Mammary epithelial cell (primary cell): ENCODE measurements at regions of chr12 and their contacts with region 1.

Region 1: DNA sequence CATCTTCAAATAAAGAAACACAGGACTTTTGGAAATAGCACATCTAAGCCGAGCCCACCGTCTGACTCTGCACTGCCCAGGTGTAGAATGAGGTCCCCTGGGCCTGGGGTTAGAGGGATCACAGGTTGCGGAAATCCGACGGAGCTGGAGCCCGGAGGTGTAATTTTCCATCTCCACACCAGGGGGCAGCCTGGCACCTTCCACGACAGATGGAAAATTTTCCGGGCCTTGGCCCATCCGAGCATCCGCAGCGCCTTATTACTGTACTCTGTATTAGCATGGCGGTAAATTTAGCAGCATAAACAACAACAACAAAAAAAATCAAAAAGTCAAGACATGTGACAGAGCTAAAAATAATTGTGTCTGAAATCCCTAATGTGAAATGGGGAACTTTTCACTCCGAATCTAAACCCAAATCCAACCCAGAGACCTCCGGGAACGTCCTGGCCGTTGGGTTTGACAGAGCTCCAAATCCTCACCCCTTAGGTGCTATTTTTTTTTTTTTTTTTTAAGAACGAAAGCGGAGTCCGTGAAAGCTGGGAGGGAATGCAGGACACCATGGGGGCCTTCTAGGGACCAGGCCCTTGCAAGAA is 93.9 kb downstream of the KSR2 start:
- DNase-seq: peak; percentile 32
- H3K4me3 ChIP-seq: no peak overlapping the region
- H3K27ac ChIP-seq: no peak overlapping the region
- H3K4me1 ChIP-seq: no peaks in the 10 kb centered on the region
- H3K27me3 ChIP-seq: no peaks in the 10 kb centered on the region
- CTCF ChIP-seq: peak; percentile 70 to 80

Region 2: GRCh38 chr12:117926391-117926899 is 51.5 kb after region 1 on chr12:
- CTCF ChIA-PET with region 1: no interaction called
- dilution Hi-C with region 1: no loop called
- in situ Hi-C with region 1: no loop called
- intact Hi-C with region 1: no loop called
- DNase-seq: no peak
- H3K4me3 ChIP-seq: no peak overlapping the region
- H3K27ac ChIP-seq: no peak overlapping the region
- H3K4me1 ChIP-seq: no peaks in the 10 kb centered on the region
- H3K27me3 ChIP-seq: no peaks in the 10 kb centered on the region
- CTCF ChIP-seq: no peak

Region 3: DNA sequence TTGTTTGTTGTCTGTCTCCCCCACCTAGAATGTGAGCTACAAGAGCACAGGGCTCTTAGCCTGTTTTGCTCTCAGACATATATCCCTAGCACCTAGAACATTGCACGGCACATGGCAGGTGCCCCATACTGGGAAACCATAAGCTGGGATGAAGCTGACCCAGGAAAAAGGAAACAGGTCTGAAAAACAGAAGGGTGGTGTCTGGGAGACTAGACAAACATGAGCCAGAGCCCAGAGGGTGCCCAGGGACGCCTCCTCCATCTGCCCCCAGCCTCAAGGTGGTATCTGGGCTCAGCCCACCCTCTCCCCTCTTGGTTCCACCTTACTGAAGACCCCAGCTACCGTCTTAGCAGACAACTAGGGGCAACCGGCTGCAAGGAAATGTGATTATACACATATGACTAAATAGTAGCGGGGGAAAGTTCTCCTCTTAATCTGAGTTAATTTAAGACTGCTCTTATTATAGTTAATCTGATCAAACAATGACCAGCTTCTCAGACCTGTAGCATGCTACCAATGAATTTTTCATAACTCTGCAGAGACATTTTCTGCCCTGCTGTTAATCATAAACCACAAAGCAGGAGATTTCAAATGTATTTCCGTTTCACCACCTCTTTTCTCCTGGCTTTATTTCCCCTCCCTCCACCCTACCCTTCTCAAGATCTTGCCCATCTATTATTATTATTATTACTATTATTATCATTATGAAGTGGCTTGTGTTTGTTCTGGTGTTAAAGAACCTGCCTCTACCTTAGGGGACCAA is 62.0 kb after region 1 on chr12:
- CTCF ChIA-PET with region 1: no interaction called
- dilution Hi-C with region 1: no loop called
- in situ Hi-C with region 1: no loop called
- intact Hi-C with region 1: no loop called
- DNase-seq: no peak
- H3K4me3 ChIP-seq: no peak overlapping the region
- H3K27ac ChIP-seq: no peak overlapping the region
- H3K4me1 ChIP-seq: no peaks in the 10 kb centered on the region
- H3K27me3 ChIP-seq: no peaks in the 10 kb centered on the region
- CTCF ChIP-seq: no peak

Region 4: DNA sequence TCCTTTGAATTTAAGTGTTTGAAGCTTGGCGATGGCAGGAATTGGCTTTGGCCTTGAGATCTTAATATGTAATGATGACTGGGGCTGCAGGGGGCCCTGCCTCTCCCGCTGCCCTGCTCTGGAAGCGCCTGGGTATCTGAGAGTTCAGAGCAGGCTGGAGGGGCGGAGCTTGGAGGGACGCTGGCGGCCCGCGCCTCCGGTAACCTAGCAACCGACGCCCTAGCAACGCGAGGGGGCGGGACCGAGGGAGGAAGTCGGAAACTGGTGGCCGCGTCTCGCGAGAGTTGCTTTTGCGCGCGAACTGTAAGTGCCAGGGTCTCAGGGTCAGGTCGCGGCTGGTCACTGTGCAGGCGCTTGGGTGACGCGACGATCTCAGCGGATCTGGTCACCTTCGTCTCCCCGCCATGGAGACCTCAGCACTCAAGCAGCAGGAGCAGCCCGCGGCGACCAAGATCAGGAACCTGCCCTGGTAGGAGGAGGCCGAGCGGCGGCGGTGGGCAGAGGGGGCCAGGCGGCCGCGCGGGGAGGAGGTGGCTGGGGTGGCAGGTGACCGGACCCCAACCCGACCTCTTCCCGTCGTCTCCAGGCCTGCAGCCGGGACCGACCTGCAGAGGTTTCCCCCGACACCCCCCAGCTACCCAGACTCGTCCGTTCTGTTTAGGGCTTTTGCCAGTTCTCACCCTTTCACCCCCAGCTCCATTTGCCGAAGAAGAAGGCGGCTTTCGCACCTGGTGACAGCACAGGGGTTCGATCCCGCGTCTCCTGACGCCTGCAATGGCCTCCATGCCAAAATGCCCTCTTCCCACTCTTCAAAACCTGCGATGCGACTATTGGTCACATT is 141.7 kb after region 1 on chr12 and contains the start of gene RFC5:
- CTCF ChIA-PET with region 1: no interaction called
- dilution Hi-C with region 1: no loop called
- in situ Hi-C with region 1: no loop called
- intact Hi-C with region 1: loop called (anchors 5 kb)
- DNase-seq: peak; percentile 90
- H3K4me3 ChIP-seq: peak within 1 kb of the TSS; percentile 69 to 97 (median 80)
- H3K27ac ChIP-seq: peak within 1 kb of the TSS; percentile 76
- H3K4me1 ChIP-seq: peaks cover 14% of the 10 kb centered on the region
- H3K27me3 ChIP-seq: no peaks in the 10 kb centered on the region
- CTCF ChIP-seq: no peak
- total RNA-seq, gene RFC5: 11.5 to 24.0 TPM

Region 5: GRCh38 chr12:118035246-118036041 is 160.5 kb after region 1 on chr12:
- CTCF ChIA-PET with region 1: interaction called, 7 read pairs
- dilution Hi-C with region 1: no loop called
- in situ Hi-C with region 1: loop called in 1 of 2 experiments (anchors 10 kb)
- intact Hi-C with region 1: loop called (anchors 1 kb)
- DNase-seq: no peak
- H3K4me3 ChIP-seq: no peak overlapping the region
- H3K27ac ChIP-seq: no peak overlapping the region
- H3K4me1 ChIP-seq: no peaks in the 10 kb centered on the region
- H3K27me3 ChIP-seq: no peaks in the 10 kb centered on the region
- CTCF ChIP-seq: peak in 1 of 2 donors; percentile 17

Region 6: GRCh38 chr12:118103604-118104382 is 228.9 kb after region 1 on chr12 and contains the start of gene VSIG10:
- CTCF ChIA-PET with region 1: no interaction called
- dilution Hi-C with region 1: no loop called
- in situ Hi-C with region 1: no loop called
- intact Hi-C with region 1: loop called (anchors 1 kb)
- DNase-seq: peak; percentile 64
- H3K4me3 ChIP-seq: peak within 1 kb of the TSS; percentile 74 to 79 (median 77)
- H3K27ac ChIP-seq: peak within 1 kb of the TSS; percentile 13
- H3K4me1 ChIP-seq: peaks cover 9% of the 10 kb centered on the region
- H3K27me3 ChIP-seq: no peaks in the 10 kb centered on the region
- CTCF ChIP-seq: no peak
- total RNA-seq, gene VSIG10: 11.3 to 16.8 TPM

Region 7: DNA sequence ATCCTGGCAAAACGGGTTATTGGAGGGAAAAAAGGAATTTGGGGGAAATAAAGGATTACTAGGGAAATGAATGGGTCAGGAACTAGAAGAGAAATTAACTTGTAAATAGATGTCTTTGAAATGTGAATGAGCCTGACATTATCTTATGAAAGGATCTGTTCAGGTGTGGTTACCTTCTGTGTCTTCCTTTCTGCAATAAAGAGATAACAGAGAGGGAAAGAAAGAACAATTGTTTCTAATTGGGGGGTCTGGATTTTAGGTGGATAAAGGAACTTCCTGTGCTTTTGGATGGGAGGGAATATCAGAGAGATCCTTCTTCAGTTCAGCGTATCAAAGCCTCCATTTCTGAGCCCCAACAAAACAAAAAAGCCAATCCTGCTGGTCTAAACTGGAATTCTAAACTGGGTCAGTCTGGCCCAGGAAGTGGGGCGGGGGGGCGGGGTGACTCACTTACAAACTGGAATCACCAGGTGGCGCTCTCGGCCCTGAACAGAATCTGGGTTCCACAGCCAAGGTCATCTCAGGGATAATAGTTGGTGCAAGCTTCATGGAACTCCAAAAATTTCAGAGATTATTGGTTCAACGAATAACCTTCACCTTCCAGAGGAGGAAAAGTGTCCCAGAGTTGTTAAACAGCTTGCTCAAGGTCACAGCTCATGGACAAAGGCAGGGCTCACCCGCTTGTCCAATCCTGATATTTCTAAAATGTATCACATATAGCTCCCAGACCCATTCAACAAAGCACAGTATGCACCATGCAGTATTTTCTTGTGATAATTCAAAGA is 245.8 kb after region 1 on chr12:
- CTCF ChIA-PET with region 1: no interaction called
- dilution Hi-C with region 1: no loop called
- in situ Hi-C with region 1: no loop called
- intact Hi-C with region 1: loop called (anchors 1 kb)
- DNase-seq: peak; percentile 40
- H3K4me3 ChIP-seq: no peak overlapping the region
- H3K27ac ChIP-seq: no peak overlapping the region
- H3K4me1 ChIP-seq: peaks cover 3% of the 10 kb centered on the region
- H3K27me3 ChIP-seq: no peaks in the 10 kb centered on the region
- CTCF ChIP-seq: peak; percentile 37 to 64

Region 8: GRCh38 chr12:118135788-118136558 is 261.0 kb after region 1 on chr12 and contains the start of gene PEBP1:
- CTCF ChIA-PET with region 1: interaction called, 4 read pairs
- dilution Hi-C with region 1: no loop called
- in situ Hi-C with region 1: no loop called
- intact Hi-C with region 1: loop called (anchors 2 kb)
- DNase-seq: peak; percentile 88
- H3K4me3 ChIP-seq: peak within 1 kb of the TSS; percentile 87 to 91 (median 90)
- H3K27ac ChIP-seq: peak within 1 kb of the TSS; percentile 56
- H3K4me1 ChIP-seq: peaks cover 5% of the 10 kb centered on the region
- H3K27me3 ChIP-seq: no peaks in the 10 kb centered on the region
- CTCF ChIP-seq: no peak
- total RNA-seq, gene PEBP1: 146 to 175 TPM